Activated CD4-positive, alpha-beta T cell treated with anti-CD3 and anti-CD28 coated beads for 36 hours (primary cell): ENCODE measurements at regions of chr6 and their contacts with region 1.

Region 1: GRCh38 chr6:110528101-110528929 is 51.9 kb upstream of the SLC22A16 start:
- DNase-seq: peak; percentile 69
- ATAC-seq: peak; percentile 77
- H3K4me3 Mint-ChIP-seq: no peak overlapping the region
- H3K27ac Mint-ChIP-seq: no peak overlapping the region
- H3K4me1 Mint-ChIP-seq: peaks cover 9% of the 10 kb centered on the region
- H3K27me3 Mint-ChIP-seq: peaks cover 4% of the 10 kb centered on the region

Region 2: DNA sequence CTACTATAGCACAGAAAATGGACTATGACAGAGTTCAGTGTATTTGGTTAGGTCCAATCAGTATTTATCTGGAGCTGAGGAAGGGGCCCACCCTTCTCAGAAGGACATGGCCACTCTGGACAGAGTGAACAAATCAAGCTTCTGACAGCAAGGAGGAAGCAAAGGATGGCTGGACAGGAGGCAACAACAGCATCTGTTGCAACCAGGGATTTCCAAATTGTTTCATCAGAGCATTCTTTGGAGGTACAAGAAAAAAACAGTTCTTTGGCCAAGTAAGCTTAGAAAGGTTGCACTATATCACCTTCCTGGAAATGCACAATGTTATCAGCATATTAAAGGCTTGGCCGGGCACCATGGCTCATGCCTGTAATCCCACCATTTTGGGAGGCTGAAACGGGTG is 66.8 kb after region 1 on chr6:
- CTCF ChIA-PET with region 1: no interaction called
- POLR2A ChIA-PET with region 1: no interaction called
- intact Hi-C with region 1: no loop called
- DNase-seq: no peak
- ATAC-seq: no peak
- H3K4me3 Mint-ChIP-seq: no peak overlapping the region
- H3K27ac Mint-ChIP-seq: no peak overlapping the region
- H3K4me1 Mint-ChIP-seq: peaks cover 7% of the 10 kb centered on the region
- H3K27me3 Mint-ChIP-seq: no peaks in the 10 kb centered on the region

Region 3: DNA sequence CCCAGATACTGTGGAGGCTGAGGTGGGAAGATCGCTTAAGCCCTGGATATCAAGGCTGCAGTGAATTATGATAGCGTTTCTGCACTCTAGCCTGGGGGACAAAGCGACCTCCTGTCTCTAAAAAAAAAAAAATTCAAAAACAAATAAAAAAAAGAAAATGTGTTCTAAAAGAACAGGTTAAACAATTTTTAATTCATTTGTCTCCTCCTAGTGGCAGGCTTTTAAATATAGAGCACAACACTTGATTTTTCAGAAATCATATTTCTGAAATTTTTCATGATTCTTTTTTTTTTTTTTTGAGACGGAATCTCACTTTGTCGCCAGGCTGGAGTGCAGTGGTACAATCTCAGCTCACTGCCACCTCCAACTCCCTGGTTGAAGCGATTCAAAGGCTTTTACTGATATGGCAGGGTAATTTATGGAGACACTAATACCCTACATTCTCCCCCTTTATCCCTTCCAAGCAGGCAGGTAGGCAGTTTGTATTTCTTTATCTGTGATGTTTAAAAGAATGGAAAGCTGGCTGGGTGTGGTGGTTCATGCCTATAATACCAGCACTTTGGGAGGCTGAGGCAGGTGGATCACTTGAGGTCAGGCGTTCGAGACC is 421.5 kb after region 1 on chr6:
- CTCF ChIA-PET with region 1: interaction called, 6 read pairs
- POLR2A ChIA-PET with region 1: no interaction called
- intact Hi-C with region 1: loop called (anchors 1 kb)
- DNase-seq: no peak
- ATAC-seq: no peak
- H3K4me3 Mint-ChIP-seq: no peak overlapping the region
- H3K27ac Mint-ChIP-seq: no peak overlapping the region
- H3K4me1 Mint-ChIP-seq: peaks cover 9% of the 10 kb centered on the region
- H3K27me3 Mint-ChIP-seq: peaks cover 1% of the 10 kb centered on the region

Region 4: GRCh38 chr6:110999634-111000270 is 471.4 kb after region 1 on chr6:
- CTCF ChIA-PET with region 1: no interaction called
- POLR2A ChIA-PET with region 1: no interaction called
- intact Hi-C with region 1: loop called (anchors 1 to 2 kb)
- DNase-seq: no peak
- ATAC-seq: no peak
- H3K4me3 Mint-ChIP-seq: no peak overlapping the region
- H3K27ac Mint-ChIP-seq: no peak overlapping the region
- H3K4me1 Mint-ChIP-seq: peaks cover 4% of the 10 kb centered on the region
- H3K27me3 Mint-ChIP-seq: no peaks in the 10 kb centered on the region

Region 5: DNA sequence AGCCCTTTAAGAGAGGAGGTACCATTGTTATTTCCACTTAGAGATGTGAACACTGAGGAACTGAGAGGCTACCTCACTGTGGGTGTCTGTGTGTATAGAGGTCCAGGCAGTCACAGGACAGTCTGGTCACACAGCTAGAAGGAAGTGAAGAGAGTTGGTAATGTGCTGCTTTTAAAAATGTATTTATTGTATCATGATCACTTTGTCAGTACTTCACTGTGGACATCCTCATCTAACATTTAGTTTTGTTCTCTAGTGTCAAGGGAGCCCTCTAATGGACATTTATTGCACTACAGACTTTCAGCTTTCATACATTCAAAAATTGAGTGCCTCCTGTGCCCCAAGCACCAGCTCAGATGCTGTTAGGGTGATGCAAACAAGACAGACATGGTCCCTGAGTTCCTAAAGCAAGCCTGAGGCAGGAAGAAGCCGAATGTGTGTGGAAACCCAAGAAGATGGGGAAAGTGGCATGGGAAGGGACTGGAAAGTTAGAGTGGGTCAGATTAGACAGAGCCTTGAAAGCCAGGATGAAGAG is 681.9 kb after region 1 on chr6:
- CTCF ChIA-PET with region 1: no interaction called
- POLR2A ChIA-PET with region 1: no interaction called
- intact Hi-C with region 1: loop called in 1 of 2 experiments (anchors 2 kb)
- DNase-seq: peak; percentile 13
- ATAC-seq: peak; percentile 78
- H3K4me3 Mint-ChIP-seq: no peak overlapping the region
- H3K27ac Mint-ChIP-seq: no peak overlapping the region
- H3K4me1 Mint-ChIP-seq: no peaks in the 10 kb centered on the region
- H3K27me3 Mint-ChIP-seq: no peaks in the 10 kb centered on the region